ENCODE measurements at regions of chr16 and their contacts with region 1.

Region 1: DNA sequence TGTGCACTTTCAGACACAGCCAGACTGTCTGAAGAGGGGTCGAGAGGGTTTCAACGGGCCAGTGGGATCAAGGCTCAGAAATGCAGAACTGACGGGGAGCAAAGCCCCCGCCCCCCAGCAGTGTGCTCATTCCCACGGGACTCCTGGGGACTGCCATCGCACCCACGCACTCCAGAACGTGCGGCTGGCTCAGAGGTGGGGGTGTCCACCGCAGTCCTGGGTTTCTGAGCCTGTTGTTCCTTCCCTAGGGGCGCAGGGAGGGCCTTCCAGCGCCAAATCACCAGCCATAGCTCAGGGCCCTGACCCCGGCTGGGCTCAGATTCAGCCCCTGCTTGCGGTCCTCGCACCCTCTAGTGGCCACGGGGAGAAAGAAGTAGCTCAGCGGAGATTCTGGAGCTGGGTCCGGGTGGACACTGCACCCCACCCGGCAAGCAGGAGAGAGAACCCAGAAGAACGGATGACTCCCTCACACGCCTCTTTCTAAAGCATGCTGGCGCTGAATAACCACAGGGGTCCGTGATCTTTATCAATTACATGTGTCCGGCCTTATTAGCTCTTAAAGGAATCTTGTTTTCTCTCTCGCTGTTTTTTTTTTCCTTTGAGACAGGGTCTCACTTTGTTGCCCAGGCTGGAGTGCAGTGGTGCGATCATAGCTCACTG is 45.0 kb upstream of the USP7 start:
- DNase-seq: no peak
- H3K4me3 ChIP-seq: 0 out of 2 replicates have a peak overlapping the region, but pooled peaks have one; percentile 1
- H3K27ac ChIP-seq: no peak overlapping the region
- H3K27me3 ChIP-seq: no peaks in the 10 kb centered on the region
- CTCF ChIP-seq: peak; percentile 89

Region 2: DNA sequence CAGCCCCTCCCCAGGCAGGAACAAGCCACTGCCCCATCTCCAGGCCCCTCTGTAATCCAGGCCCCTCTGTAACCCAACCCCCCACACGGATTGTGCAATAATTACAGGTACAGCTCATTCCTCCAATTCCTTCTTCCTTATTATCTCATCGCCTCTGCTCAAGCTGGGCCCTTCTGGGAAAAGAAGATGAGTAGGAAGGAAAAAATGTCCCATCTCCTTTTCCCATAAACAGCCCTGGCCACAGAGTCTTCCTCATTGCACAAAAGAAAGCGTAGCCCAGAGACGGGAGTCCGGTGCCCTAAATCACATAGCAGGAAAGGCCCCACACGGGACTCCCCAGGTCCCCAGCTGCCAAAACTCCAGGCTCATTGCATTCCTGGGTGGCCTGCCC is 130.2 kb before region 1 on chr16:
- CTCF ChIA-PET with region 1: interaction called, 26 read pairs
- POLR2A ChIA-PET with region 1: no interaction called
- DNase-seq: peak; percentile 66
- H3K4me3 ChIP-seq: no peak overlapping the region
- H3K27ac ChIP-seq: peak overlapping the region; percentile 93
- H3K27me3 ChIP-seq: no peaks in the 10 kb centered on the region
- CTCF ChIP-seq: no peak

Region 3: GRCh38 chr16:8905168-8905762 is 103.5 kb before region 1 on chr16:
- CTCF ChIA-PET with region 1: interaction called, 31 read pairs
- POLR2A ChIA-PET with region 1: no interaction called
- DNase-seq: no peak
- H3K4me3 ChIP-seq: no peak overlapping the region
- H3K27ac ChIP-seq: no peak overlapping the region
- H3K27me3 ChIP-seq: no peaks in the 10 kb centered on the region
- CTCF ChIP-seq: peak; percentile 62

Region 4: DNA sequence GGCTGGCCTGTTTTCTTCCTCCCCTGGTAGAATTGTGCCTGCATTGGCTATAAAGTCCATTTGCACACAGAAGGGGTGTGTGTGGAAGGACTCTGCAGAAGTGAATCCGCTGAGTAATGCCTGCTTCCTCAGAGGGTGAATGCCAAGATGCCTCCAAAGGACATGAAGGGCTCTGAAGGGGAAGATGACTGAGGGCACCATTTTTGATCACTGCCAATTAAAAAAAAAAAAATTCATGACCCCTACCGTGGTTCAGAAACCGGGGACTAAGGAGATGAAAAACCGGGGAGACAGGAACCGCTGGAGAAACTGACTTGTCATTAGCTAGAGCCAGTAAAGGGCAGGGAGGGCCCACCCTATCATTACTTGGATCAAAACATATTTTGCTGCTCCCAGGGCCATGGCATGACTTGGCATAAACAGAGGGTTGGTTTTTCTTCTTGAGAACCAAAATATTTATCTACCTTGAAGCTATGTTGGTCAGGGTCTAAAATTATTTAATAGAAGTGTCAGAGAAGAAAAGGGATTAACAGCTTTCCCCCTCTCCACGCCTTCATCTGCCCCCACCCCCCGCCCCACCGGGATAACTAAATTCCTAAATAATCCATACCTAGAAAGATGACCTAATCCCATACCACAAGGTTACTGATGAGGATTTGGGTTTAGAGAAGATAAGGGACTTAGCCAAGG is 41.5 kb before region 1 on chr16:
- CTCF ChIA-PET with region 1: interaction called, 12 read pairs
- POLR2A ChIA-PET with region 1: no interaction called
- DNase-seq: no peak
- H3K4me3 ChIP-seq: no peak overlapping the region
- H3K27ac ChIP-seq: no peak overlapping the region
- H3K27me3 ChIP-seq: no peaks in the 10 kb centered on the region
- CTCF ChIP-seq: no peak

Region 5: GRCh38 chr16:9027070-9027795 is 18.5 kb after region 1 on chr16:
- CTCF ChIA-PET with region 1: interaction called, 26 read pairs
- POLR2A ChIA-PET with region 1: no interaction called
- DNase-seq: no peak
- H3K4me3 ChIP-seq: no peak overlapping the region
- H3K27ac ChIP-seq: no peak overlapping the region
- H3K27me3 ChIP-seq: no peaks in the 10 kb centered on the region
- CTCF ChIP-seq: no peak

Region 6: DNA sequence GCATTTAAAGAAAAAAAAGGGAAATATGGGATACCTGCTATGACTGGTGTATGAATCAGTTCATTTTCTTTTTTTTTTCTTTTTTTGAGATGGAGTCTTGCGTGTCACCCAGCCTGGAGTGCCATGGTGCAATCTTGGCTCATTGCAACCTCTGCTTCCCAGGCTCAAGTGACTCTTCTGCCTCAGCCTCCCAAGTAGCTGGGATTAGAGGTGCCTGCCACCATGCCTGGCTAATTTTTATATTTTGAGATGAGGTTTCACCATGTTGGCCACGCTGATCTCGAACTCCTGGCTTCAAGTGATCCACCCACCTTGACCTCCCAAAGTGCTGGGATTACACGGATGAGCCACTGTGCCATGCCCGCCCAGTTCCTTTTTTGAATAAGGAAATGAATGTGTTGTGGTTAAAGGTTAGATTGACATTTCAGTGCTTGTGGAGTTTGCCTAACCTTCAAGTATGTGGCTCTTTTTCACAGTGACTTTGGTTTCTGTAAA is 90.4 kb after region 1 on chr16:
- CTCF ChIA-PET with region 1: interaction called, 21 read pairs
- POLR2A ChIA-PET with region 1: no interaction called
- DNase-seq: no peak
- H3K4me3 ChIP-seq: no peak overlapping the region
- H3K27ac ChIP-seq: no peak overlapping the region
- H3K27me3 ChIP-seq: no peaks in the 10 kb centered on the region
- CTCF ChIP-seq: no peak

Region 7: DNA sequence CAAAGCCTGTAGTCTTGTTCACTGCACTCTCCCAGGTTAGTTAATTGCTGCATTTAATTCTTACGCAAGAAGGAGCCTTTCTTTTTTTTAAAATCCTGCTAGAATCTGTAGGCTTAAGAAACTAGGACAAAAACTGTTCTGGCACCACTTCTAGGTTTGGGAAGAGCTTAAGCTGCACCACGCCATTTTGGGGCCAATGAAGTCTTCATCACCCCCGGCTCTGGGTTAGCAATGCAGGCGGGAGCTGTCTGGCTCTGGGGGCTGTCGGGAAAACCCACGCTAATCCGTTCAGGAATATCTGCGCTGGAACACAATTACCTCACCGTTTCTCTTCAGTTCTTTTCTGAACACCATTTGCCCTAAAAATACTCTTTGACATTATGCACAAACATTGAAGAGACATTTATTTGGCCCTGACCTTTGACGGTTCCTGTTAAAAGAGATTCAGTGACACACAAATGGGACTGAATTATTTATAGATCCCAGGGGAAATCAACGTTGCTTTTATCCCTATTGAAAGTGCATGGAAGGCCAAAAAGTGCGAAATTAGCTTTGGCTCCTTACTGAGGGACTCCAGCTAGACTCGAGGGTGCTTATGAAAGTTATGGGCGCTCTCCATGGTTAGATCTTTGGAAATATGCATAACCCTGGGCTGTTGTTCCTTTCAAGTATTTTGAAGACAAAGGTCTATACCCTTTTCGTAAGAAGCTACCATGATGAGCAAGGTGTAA is 332.0 kb after region 1 on chr16:
- CTCF ChIA-PET with region 1: no interaction called
- POLR2A ChIA-PET with region 1: no interaction called
- DNase-seq: no peak
- H3K4me3 ChIP-seq: no peak overlapping the region
- H3K27ac ChIP-seq: no peak overlapping the region
- H3K27me3 ChIP-seq: no peaks in the 10 kb centered on the region
- CTCF ChIP-seq: no peak

Measured in AG04450 (cell line).